Natural killer cell (primary cell): ENCODE measurements at regions of chr21 and their contacts with region 1.

Region 1: DNA sequence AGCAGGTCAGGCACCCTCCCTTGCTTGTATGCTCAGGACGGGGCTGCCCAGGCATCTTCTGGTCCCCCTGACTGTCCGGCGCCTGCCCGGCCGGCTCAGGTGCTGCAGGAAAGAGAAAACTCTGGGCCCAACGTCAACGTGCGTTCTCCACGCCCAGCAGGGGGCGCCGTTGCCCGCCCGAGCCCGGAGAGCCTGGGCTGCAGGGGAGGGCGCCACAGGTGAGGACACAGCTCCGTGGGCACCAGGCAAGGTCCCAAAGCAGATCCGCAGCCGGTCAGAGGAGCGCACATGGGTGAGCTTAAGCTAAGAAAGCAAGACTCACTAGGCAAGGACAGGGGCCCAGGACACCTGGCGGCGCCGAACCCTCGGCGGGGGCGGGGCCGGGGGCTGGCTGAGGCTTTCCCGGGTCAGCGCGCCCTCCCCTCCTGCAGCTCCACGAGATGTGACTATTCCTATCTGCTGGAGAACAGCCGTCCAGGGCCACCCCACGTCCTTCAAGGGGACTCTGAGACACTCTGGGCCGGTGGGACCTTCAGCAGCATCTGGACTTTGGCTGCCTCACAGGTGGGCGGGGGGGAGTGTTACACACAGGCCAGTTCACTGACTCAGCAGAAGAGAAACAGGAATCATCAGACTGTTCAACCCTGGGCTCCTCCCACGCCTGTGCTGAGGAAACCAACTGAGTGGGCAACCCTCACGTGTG is 29.3 kb downstream of the KRTAP10-1 start:
- DNase-seq: peak; percentile 78 to 90
- ATAC-seq: peak; percentile 68 to 92 (median 90)
- H3K4me3 ChIP-seq: no peak overlapping the region
- H3K4me3 Mint-ChIP-seq: no peak overlapping the region
- H3K27ac ChIP-seq: no peak overlapping the region
- H3K27ac Mint-ChIP-seq: no peak overlapping the region
- H3K4me1 ChIP-seq: peaks cover 14% of the 10 kb centered on the region
- H3K4me1 Mint-ChIP-seq: peaks cover 0 to 5% of the 10 kb centered on the region in 2 donors
- H3K27me3 ChIP-seq: no peaks in the 10 kb centered on the region
- H3K27me3 Mint-ChIP-seq: peaks cover 0 to 3% of the 10 kb centered on the region in 2 donors
- CTCF ChIP-seq: peak; percentile 88

Region 2: GRCh38 chr21:44317241-44317782 is 193.3 kb before region 1 on chr21:
- intact Hi-C with region 1: no loop called
- DNase-seq: no peak
- ATAC-seq: no peak
- H3K4me3 ChIP-seq: no peak overlapping the region
- H3K4me3 Mint-ChIP-seq: no peak overlapping the region
- H3K27ac ChIP-seq: no peak overlapping the region
- H3K27ac Mint-ChIP-seq: no peak overlapping the region
- H3K4me1 ChIP-seq: no peaks in the 10 kb centered on the region
- H3K4me1 Mint-ChIP-seq: peaks cover 0 to 4% of the 10 kb centered on the region in 2 donors
- H3K27me3 ChIP-seq: no peaks in the 10 kb centered on the region
- H3K27me3 Mint-ChIP-seq: no peaks in the 10 kb centered on the region
- CTCF ChIP-seq: no peak

Region 3: DNA sequence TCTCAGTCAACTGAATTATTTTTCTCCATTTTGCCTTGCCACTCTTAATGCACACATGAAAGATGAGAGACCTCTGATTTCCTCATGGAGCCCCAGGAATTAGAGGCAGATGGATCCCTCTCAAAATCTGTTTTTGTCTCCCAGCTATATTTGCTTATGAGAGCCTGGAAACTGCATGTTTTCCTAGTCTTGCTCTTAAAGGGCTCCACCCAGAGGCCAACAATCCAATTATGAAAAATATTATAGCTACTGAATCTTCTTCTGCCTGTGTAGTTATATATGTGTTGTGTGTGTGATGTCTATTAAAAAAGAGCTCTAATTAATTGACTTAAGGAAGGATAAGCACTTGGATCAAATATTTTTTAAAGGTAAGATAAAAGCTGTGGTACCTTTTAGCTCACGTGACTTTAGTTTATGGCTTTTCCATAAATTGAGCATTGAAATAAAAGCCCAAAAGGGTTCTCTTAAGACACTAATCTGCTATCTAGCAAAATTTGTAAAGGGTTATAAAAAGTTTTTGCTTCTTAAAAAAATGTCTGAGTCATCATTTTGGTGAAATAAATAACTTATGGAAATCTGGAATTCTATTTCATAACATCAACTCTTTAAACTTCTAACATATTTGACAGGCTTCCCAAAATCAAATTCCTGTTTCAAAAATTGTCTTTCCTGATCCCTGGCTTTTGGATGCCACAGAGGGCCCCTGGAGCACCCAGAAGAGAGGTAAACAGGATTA is 231.9 kb after region 1 on chr21:
- intact Hi-C with region 1: loop called (anchors 1 kb)
- DNase-seq: peak in 1 of 2 donors; percentile 67
- ATAC-seq: no peak
- H3K4me3 ChIP-seq: no peak overlapping the region
- H3K4me3 Mint-ChIP-seq: no peak overlapping the region
- H3K27ac ChIP-seq: no peak overlapping the region
- H3K27ac Mint-ChIP-seq: no peak overlapping the region
- H3K4me1 ChIP-seq: no peaks in the 10 kb centered on the region
- H3K4me1 Mint-ChIP-seq: peaks cover 4 to 6% of the 10 kb centered on the region in 2 donors
- H3K27me3 ChIP-seq: no peaks in the 10 kb centered on the region
- H3K27me3 Mint-ChIP-seq: peaks cover 0 to 2% of the 10 kb centered on the region in 2 donors
- CTCF ChIP-seq: no peak

Region 4: DNA sequence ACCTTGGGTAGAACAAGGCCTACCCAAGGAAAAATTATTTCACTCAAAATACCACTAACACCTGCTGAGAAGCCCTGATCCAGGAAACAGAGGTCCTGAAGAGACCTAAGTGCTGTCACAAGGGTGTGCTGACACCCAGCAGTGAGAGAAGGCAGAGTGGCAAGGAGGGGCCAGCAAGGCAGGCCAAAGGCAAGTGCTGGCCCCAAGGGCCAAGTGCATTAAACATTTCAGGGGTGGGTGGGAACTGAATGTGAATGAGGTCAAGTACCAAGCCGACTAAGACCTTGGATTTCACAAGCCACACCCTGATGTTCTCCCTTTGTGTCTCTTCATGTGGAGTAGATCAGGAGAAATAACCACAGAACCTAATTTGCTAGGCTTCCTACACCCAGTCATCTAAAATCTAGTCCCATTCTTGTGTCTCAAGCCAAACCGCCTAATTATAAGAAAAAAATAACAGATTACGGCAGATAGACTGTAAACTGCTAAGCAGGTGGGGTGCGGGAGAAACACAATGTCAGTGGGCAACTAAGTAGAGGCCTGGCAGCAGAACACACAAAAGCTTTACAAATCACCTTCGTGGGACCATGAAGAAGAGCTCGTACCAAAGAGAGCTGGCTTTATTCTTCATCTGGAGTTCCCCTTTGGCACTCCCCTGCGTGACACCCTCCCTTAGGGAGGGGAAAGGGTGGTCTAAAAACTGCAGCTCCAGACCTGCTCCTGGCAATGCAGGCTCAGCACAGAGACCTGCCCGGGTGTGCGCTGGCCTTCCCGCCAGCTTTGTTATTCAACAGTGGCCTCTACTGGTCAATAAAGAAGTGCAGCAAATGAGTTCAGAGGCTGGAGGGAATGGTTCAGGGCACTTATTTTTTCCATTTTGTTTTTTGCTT is 282.3 kb after region 1 on chr21:
- intact Hi-C with region 1: loop called (anchors 1 kb)
- DNase-seq: peak in 1 of 2 donors; percentile 76
- ATAC-seq: peak; percentile 89 to 99 (median 99)
- H3K4me3 ChIP-seq: no peak overlapping the region
- H3K4me3 Mint-ChIP-seq: no peak overlapping the region
- H3K27ac ChIP-seq: no peak overlapping the region
- H3K27ac Mint-ChIP-seq: no peak overlapping the region
- H3K4me1 ChIP-seq: peaks cover 4% of the 10 kb centered on the region
- H3K4me1 Mint-ChIP-seq: peaks cover 32 to 34% of the 10 kb centered on the region in 2 donors
- H3K27me3 ChIP-seq: no peaks in the 10 kb centered on the region
- H3K27me3 Mint-ChIP-seq: no peaks in the 10 kb centered on the region
- CTCF ChIP-seq: peak; percentile 74